SK-N-SH (cell line): ENCODE measurements at regions of chr2 and their contacts with region 1.

Region 1: DNA sequence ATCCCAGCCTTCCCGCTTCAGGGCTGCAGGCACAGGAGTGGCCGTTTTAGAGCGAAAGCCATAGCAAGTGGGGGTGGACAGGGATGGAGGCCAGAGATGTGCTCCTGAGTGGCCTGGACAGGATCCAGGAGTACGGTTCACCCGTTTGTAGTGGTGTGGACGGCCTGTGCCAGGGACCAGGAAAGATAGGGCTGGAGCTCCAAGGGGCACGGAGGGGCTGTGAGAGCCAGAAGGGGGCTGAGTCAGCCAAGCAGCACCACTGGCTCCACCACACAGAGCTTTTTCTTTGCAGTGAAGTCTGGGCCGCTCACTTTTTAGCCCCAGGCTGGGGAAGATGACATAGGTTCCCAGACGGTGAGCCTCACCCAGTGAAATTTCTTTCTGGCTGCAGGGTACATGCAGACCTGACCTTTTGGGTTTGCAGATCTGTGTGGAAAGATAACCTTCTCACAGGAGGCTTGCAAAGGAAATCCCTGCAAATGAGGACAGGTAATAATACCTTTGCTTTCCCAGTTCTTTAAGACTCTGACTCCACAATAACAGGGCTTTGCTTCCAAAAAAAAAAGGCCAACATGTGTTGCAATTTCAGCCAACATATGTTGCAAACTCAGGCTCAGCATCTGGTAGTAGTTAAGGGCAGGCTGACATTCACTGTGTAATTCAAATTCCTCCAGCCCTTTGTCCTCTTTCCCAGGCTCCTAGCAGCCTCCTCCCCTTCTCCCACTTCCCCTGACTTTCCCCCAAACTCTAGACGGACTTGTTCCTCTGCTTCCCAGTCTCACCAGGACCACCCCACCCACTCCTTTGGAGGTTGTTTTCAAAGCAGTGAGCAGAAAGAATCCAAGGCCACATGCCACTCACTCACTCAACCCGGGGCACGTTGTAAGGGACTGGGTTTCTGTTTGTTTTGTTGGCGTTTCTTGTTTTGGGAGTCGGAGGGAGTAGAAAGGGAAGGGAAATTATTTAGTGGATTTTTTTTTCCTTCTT is 20.3 kb upstream of the LAPTM4A start:
- DNase-seq: peak; percentile 80
- H3K4me3 ChIP-seq: peak overlapping the region; percentile 11 to 23; a peak in 2 of 4 replicates
- H3K27ac ChIP-seq: peak overlapping the region; percentile 98 to 99
- H3K4me1 ChIP-seq: peaks cover 21 to 52% of the 10 kb centered on the region in 2 experiments
- H3K27me3 ChIP-seq: no peaks in the 10 kb centered on the region
- CTCF ChIP-seq: no peak
- EP300 ChIP-seq: peak; percentile 60 to 73; a peak in 3 of 4 replicates
- RAD21 ChIP-seq: peak; percentile 45

Region 2: GRCh38 chr2:20033341-20033740 is 38.3 kb before region 1 on chr2:
- CTCF ChIA-PET with region 1: no interaction called
- POLR2A ChIA-PET with region 1: no interaction called
- DNase-seq: no peak
- H3K4me3 ChIP-seq: no peak overlapping the region
- H3K27ac ChIP-seq: no peak overlapping the region
- H3K4me1 ChIP-seq: peaks cover 0 to 3% of the 10 kb centered on the region in 2 experiments; a peak in 1 of 4 replicates
- H3K27me3 ChIP-seq: no peaks in the 10 kb centered on the region
- CTCF ChIP-seq: no peak
- EP300 ChIP-seq: no peak
- RAD21 ChIP-seq: no peak

Region 3: DNA sequence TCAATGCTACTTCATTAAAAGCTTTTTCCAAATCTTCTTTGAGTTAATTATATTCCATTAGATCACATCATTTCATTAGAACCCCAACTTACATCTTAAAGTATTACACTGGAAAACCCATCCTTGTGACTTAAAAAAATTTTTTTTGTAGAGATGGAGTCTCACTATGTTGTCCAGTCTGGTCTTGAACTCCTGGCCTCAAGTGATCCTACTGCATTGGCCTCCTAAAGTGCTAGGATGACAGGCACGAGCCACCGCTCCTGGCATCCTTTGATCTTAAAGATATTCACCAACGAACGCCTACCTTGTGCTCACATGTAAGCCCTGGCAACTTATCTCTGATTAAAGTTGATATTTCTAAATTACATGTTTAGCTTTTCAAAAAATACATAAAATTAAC is 26.9 kb before region 1 on chr2:
- CTCF ChIA-PET with region 1: interaction called, 10 read pairs
- POLR2A ChIA-PET with region 1: no interaction called
- DNase-seq: no peak
- H3K4me3 ChIP-seq: no peak overlapping the region
- H3K27ac ChIP-seq: no peak overlapping the region
- H3K4me1 ChIP-seq: peaks cover 14 to 27% of the 10 kb centered on the region in 2 experiments; a peak in 3 of 4 replicates
- H3K27me3 ChIP-seq: no peaks in the 10 kb centered on the region
- CTCF ChIP-seq: no peak
- EP300 ChIP-seq: no peak
- RAD21 ChIP-seq: no peak

Region 4: DNA sequence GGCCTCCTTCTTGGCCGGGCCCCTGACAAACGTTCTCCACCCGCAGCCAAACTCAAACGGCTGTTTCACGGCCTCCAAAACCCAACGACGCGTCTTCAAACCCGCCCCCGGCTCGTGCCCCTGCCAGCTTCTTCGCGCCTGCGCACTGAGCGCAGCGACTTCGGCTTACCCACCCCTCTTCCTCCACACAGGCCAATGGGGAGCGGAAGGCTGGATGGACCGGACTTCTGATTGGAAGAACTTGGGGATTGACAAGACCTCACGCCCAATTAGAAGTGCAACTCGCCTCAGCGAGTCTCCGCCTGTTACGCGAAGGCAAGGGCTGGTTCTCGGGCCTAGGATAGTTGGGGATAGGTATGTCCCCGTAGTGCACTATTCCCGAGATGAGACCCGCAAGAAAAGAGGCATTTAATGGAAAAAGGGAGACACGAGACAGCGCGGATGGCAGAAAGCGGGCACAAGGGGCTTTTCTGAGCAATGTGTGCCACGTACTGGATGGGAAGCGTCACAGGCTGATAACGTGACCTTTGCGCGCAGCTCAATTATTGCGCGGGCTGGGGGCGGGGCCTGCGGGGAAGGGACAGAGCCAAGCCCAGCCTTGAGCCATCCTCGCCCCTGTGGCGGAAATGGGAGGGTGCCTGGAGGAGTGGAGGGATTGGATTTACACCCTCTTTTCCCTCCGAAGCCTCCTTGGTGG is 20.0 kb before region 1 on chr2 and contains the start of gene LAPTM4A:
- CTCF ChIA-PET with region 1: interaction called, 10 read pairs
- POLR2A ChIA-PET with region 1: interaction called, 30 read pairs
- DNase-seq: peak; percentile 98
- H3K4me3 ChIP-seq: peak within 1 kb of the TSS; percentile 72 to 99
- H3K27ac ChIP-seq: peak within 1 kb of the TSS; percentile 98 to 100
- H3K4me1 ChIP-seq: peaks cover 11 to 30% of the 10 kb centered on the region in 2 experiments; a peak in 3 of 4 replicates
- H3K27me3 ChIP-seq: no peaks in the 10 kb centered on the region
- CTCF ChIP-seq: no peak
- EP300 ChIP-seq: no peak; a peak in 1 of 4 replicates
- RAD21 ChIP-seq: peak; percentile 17; the same call in 1 of the 2 replicates
- polyA plus RNA-seq, gene LAPTM4A: 306 and 350 TPM in 2 replicates